ENCODE measurements at regions of chr3 and their contacts with region 1.

Region 1: GRCh38 chr3:12444582-12445468 is 39.5 kb upstream of the TSEN2 start:
- DNase-seq: peak; percentile 99
- ATAC-seq: peak; percentile 83
- H3K4me3 ChIP-seq: peak overlapping the region; percentile 18; the same call in 1 of the 2 replicates
- H3K27ac ChIP-seq: peak overlapping the region; percentile 98
- H3K4me1 ChIP-seq: peaks cover 39% of the 10 kb centered on the region
- H3K27me3 ChIP-seq: no peaks in the 10 kb centered on the region
- CTCF ChIP-seq: no peak

Region 2: DNA sequence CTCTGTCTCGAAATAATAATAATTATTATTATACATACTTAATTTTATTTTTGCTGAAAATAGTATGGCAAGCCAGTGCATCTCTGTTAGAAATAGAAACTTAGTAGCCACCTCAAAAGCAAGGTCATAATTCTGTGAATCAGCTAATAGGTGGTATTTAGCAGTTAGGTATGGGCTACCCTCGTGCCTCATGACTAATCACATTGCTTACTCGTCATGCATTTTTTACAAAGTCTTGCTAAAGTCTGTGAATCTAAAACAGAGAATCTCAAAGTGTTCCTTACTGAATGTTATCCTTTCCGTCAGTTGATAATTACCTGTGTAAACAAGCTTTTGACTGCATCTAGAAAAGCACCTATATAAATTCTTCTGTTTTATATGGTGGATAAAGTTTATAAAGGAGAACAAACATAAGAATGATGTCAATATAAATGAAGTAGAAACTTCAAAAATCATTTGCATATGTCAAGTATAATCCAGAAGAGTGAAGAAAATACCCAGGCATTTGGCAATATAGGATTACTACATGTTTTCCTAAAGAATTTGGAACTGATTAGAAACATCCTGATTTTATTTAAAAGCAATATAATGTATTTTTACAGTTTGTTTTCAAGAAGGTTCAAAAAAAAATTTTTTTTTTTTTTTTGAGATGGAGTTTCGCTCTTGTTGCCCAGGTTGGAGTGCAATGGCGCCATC is 149.8 kb before region 1 on chr3:
- CTCF ChIA-PET with region 1: no interaction called
- POLR2A ChIA-PET with region 1: no interaction called
- intact Hi-C with region 1: no loop called
- DNase-seq: peak; percentile 80
- ATAC-seq: peak; percentile 55
- H3K4me3 ChIP-seq: no peak overlapping the region
- H3K27ac ChIP-seq: peak overlapping the region; percentile 46
- H3K4me1 ChIP-seq: peaks cover 64% of the 10 kb centered on the region
- H3K27me3 ChIP-seq: no peaks in the 10 kb centered on the region
- CTCF ChIP-seq: no peak

Region 3: GRCh38 chr3:12370758-12371157 is 74.1 kb before region 1 on chr3:
- CTCF ChIA-PET with region 1: no interaction called
- POLR2A ChIA-PET with region 1: no interaction called
- intact Hi-C with region 1: loop called (anchors 1 kb)
- DNase-seq: peak; percentile 88
- ATAC-seq: peak; percentile 78
- H3K4me3 ChIP-seq: no peak overlapping the region
- H3K27ac ChIP-seq: peak overlapping the region; percentile 91
- H3K4me1 ChIP-seq: peaks cover 65% of the 10 kb centered on the region
- H3K27me3 ChIP-seq: no peaks in the 10 kb centered on the region
- CTCF ChIP-seq: peak; percentile 42; the same call in 1 of the 2 replicates

Region 4: GRCh38 chr3:12395349-12396012 is 49.3 kb before region 1 on chr3:
- CTCF ChIA-PET with region 1: no interaction called
- POLR2A ChIA-PET with region 1: interaction called, 11 read pairs
- intact Hi-C with region 1: no loop called
- DNase-seq: no peak
- ATAC-seq: no peak
- H3K4me3 ChIP-seq: no peak overlapping the region
- H3K27ac ChIP-seq: peak overlapping the region; percentile 15; the same call in 1 of the 2 replicates
- H3K4me1 ChIP-seq: peaks cover 38% of the 10 kb centered on the region
- H3K27me3 ChIP-seq: no peaks in the 10 kb centered on the region
- CTCF ChIP-seq: no peak

Region 5: GRCh38 chr3:12423918-12424630 is 20.8 kb before region 1 on chr3:
- CTCF ChIA-PET with region 1: no interaction called
- POLR2A ChIA-PET with region 1: no interaction called
- intact Hi-C with region 1: loop called (anchors 2 kb)
- DNase-seq: peak; percentile 68
- ATAC-seq: peak; percentile 62
- H3K4me3 ChIP-seq: no peak overlapping the region
- H3K27ac ChIP-seq: peak overlapping the region; percentile 91
- H3K4me1 ChIP-seq: peaks cover 51% of the 10 kb centered on the region
- H3K27me3 ChIP-seq: no peaks in the 10 kb centered on the region
- CTCF ChIP-seq: no peak

Region 6: GRCh38 chr3:12471243-12471651 is 26.4 kb after region 1 on chr3:
- CTCF ChIA-PET with region 1: interaction called, 5 read pairs
- POLR2A ChIA-PET with region 1: interaction called, 9 read pairs
- intact Hi-C with region 1: loop called (anchors 1 kb)
- DNase-seq: peak; percentile 99
- ATAC-seq: peak; percentile 84
- H3K4me3 ChIP-seq: no peak overlapping the region
- H3K27ac ChIP-seq: peak overlapping the region; percentile 99
- H3K4me1 ChIP-seq: peaks cover 35% of the 10 kb centered on the region
- H3K27me3 ChIP-seq: no peaks in the 10 kb centered on the region
- CTCF ChIP-seq: peak; percentile 72

Region 7: DNA sequence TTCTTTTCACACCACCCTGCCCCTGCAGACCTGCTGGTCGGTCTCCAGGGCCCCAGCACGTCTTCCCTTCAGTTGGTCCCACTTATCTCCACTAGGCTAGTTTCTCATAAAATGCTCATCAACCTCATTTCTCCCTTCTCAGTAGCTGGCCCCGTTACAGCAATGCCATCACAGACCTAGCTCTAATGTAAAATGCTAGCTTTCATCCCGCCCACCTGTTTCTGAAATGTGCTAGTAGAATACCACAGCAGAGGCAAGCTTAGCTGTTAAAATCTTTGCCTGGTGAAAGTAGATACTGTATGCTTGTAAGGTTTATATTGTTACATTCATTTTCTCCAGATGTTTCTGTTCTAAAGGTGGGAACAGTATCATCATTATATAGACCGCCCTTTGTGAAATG is 87.4 kb after region 1 on chr3:
- CTCF ChIA-PET with region 1: no interaction called
- POLR2A ChIA-PET with region 1: no interaction called
- intact Hi-C with region 1: no loop called
- DNase-seq: no peak
- ATAC-seq: no peak
- H3K4me3 ChIP-seq: no peak overlapping the region
- H3K27ac ChIP-seq: no peak overlapping the region
- H3K4me1 ChIP-seq: no peaks in the 10 kb centered on the region
- H3K27me3 ChIP-seq: no peaks in the 10 kb centered on the region
- CTCF ChIP-seq: no peak

Region 8: GRCh38 chr3:12601072-12601471 is 156.2 kb after region 1 on chr3:
- CTCF ChIA-PET with region 1: no interaction called
- POLR2A ChIA-PET with region 1: no interaction called
- intact Hi-C with region 1: no loop called
- DNase-seq: peak; percentile 28
- ATAC-seq: peak; percentile 68
- H3K4me3 ChIP-seq: no peak overlapping the region
- H3K27ac ChIP-seq: no peak overlapping the region
- H3K4me1 ChIP-seq: no peaks in the 10 kb centered on the region
- H3K27me3 ChIP-seq: no peaks in the 10 kb centered on the region
- CTCF ChIP-seq: peak; percentile 52

Measured in PC-3 (cell line).